ENCODE measurements at regions of chr10 and their contacts with region 1.

Region 1: DNA sequence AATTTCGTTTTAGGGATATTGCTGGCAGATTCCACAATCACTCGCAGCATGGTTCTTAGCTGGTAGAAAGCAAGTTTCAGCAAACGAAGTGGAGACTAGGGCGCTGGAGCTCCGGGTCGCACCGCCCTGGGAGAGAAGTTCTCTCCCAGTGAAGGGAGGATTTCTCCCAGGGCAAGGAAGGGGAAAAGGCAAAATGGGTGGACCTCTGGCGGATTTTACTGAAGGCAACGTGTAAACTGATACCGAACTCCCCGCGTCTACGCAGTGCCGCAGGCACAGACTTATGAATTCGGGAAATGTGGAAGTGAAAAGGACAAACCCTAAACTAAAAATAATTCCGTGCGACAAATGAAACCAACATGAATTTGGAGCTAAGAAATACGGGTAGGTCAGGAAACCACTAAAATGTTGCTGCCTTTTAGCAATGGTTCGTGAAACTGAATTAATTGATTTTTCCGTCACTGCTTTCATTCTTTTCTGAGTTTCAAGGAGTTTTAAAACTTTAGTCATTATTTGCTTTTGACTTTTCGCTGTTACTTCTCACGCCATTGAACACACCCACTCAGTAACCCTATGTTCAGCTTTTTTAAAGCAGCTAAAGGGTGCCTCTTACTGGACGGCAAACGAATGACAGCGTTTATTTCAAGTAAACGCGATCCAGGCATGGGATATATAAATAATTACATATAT is at the start of gene MYOF:
- DNase-seq: peak; percentile 89
- H3K4me3 ChIP-seq: peak within 1 kb of the TSS; percentile 57 to 99 (median 72)
- H3K27ac ChIP-seq: peak within 1 kb of the TSS; percentile 89
- H3K4me1 ChIP-seq: peaks cover 22% of the 10 kb centered on the region
- H3K27me3 ChIP-seq: no peaks in the 10 kb centered on the region
- CTCF ChIP-seq: peak; percentile 46 to 47
- POLR2A ChIP-seq: peak; percentile 76
- total RNA-seq, gene MYOF: 342 and 379 TPM in 2 replicates

Region 2: DNA sequence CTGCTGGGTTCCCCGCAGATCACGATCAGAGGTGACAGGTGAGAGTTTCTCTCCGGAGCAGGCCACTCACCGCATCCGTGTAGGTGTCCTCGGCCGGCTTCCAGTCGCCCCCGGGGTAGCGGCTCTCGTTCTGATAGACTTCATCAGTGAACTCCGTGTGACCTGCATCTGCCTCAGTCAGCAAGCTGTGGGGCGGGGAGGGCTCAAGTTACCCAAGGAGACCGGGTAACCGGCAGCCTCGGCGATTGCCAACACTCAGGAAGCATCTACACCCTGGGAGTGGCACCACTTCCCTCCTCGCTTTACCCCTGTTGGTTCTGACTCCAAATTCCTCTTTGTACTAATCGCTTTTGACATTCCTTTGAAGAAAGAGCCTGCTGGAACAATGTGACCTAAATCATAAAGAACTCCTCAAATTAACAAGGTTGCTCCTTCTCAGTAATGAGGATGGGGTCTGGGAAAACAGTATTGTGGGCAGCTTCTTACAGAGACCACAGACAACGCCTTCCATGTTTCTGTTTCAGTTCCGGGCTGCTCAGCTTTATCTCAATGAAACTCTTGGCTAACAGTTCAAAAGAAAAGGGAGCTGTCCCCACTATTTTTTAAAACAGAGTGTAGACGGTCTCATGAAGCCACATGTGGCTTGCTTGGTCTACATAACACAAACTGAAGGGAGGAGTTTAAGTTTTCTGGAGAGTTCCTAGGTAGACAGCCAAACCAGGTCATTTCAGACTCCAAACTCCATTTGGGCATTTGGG is 118.2 kb before region 1 on chr10:
- CTCF ChIA-PET with region 1: interaction called, 14 read pairs
- POLR2A ChIA-PET with region 1: interaction called, 3 read pairs
- dilution Hi-C with region 1: no loop called
- intact Hi-C with region 1: no loop called
- DNase-seq: no peak
- H3K4me3 ChIP-seq: no peak overlapping the region
- H3K27ac ChIP-seq: no peak overlapping the region
- H3K4me1 ChIP-seq: peaks cover 18% of the 10 kb centered on the region
- H3K27me3 ChIP-seq: no peaks in the 10 kb centered on the region
- CTCF ChIP-seq: no peak
- POLR2A ChIP-seq: no peak

Region 3: GRCh38 chr10:93397020-93397419 is 85.3 kb before region 1 on chr10:
- CTCF ChIA-PET with region 1: interaction called, 48 read pairs
- POLR2A ChIA-PET with region 1: interaction called, 14 read pairs
- dilution Hi-C with region 1: no loop called
- intact Hi-C with region 1: no loop called
- DNase-seq: no peak
- H3K4me3 ChIP-seq: no peak overlapping the region
- H3K27ac ChIP-seq: no peak overlapping the region
- H3K4me1 ChIP-seq: no peaks in the 10 kb centered on the region
- H3K27me3 ChIP-seq: no peaks in the 10 kb centered on the region
- CTCF ChIP-seq: no peak
- POLR2A ChIP-seq: no peak

Region 4: DNA sequence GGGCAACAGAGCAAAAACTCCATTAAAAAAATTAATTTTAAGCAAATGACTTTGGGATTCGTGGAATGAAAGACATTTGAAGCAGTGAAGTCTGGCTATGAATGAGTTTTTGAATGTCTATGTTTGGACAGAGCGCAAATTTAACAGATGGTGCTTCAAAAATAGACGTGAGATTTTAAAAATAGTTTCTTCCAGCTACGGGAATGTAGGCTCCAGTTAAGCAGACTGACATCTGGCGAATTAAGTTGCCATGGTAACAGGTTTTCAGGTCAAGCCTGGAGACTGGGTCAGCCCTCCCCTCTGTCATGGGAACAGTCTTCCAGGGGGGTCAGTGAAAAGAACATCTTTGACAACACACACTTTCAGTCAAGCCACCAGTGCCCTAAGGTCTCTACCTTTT is 62.2 kb before region 1 on chr10:
- CTCF ChIA-PET with region 1: interaction called, 23 read pairs
- POLR2A ChIA-PET with region 1: no interaction called
- dilution Hi-C with region 1: no loop called
- intact Hi-C with region 1: no loop called
- DNase-seq: no peak
- H3K4me3 ChIP-seq: no peak overlapping the region
- H3K27ac ChIP-seq: no peak overlapping the region
- H3K4me1 ChIP-seq: peaks cover 30% of the 10 kb centered on the region
- H3K27me3 ChIP-seq: no peaks in the 10 kb centered on the region
- CTCF ChIP-seq: no peak
- POLR2A ChIP-seq: no peak

Region 5: GRCh38 chr10:93458821-93459257 is 23.5 kb before region 1 on chr10:
- CTCF ChIA-PET with region 1: interaction called, 76 read pairs
- POLR2A ChIA-PET with region 1: interaction called, 10 read pairs
- dilution Hi-C with region 1: no loop called
- intact Hi-C with region 1: loop called (anchors 1 kb)
- DNase-seq: peak; percentile 98
- H3K4me3 ChIP-seq: no peak overlapping the region
- H3K27ac ChIP-seq: peak overlapping the region; percentile 85
- H3K4me1 ChIP-seq: peaks cover 57% of the 10 kb centered on the region
- H3K27me3 ChIP-seq: no peaks in the 10 kb centered on the region
- CTCF ChIP-seq: no peak
- POLR2A ChIP-seq: peak; percentile 48

Region 6: DNA sequence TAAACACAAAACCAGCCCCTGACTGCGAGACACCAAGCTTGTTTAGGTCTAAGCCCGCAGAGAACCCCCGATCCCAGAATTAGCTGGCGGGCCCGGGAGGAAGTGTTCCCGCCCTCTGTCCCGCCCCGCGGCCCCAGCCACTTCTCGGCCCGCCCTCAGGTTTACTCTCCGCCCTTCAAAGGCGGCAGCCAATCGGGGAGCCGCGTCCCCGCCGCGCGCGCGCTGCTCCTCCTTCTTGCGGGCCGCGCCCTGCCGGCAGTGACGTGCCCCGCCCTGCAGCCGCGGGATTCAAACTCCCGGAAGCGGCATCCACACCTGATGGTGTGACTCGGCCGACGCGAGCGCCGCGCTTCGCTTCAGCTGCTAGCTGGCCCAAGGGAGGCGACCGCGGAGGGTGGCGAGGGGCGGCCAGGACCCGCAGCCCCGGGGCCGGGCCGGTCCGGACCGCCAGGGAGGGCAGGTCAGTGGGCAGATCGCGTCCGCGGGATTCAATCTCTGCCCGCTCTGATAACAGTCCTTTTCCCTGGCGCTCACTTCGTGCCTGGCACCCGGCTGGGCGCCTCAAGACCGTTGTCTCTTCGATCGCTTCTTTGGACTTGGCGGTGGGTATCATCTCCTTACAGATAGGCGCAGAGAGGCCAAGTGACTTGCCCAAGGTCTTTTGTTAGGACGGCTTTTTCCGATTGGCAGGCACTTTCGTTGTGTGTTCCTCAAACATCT is 14.2 kb after region 1 on chr10 and contains the start of gene CEP55:
- CTCF ChIA-PET with region 1: interaction called, 21 read pairs
- POLR2A ChIA-PET with region 1: no interaction called
- dilution Hi-C with region 1: no loop called
- intact Hi-C with region 1: no loop called
- DNase-seq: peak; percentile 97
- H3K4me3 ChIP-seq: peak within 1 kb of the TSS; percentile 83 to 96 (median 89)
- H3K27ac ChIP-seq: peak within 1 kb of the TSS; percentile 62
- H3K4me1 ChIP-seq: peaks cover 21% of the 10 kb centered on the region
- H3K27me3 ChIP-seq: no peaks in the 10 kb centered on the region
- CTCF ChIP-seq: no peak
- POLR2A ChIP-seq: peak; percentile 76
- total RNA-seq, gene CEP55: 58.9 and 63.0 TPM in 2 replicates

Region 7: GRCh38 chr10:93515071-93516005 is 33.0 kb after region 1 on chr10:
- CTCF ChIA-PET with region 1: interaction called, 20 read pairs
- POLR2A ChIA-PET with region 1: no interaction called
- dilution Hi-C with region 1: no loop called
- intact Hi-C with region 1: no loop called
- DNase-seq: peak; percentile 66
- H3K4me3 ChIP-seq: no peak overlapping the region
- H3K27ac ChIP-seq: no peak overlapping the region
- H3K4me1 ChIP-seq: peaks cover 4% of the 10 kb centered on the region
- H3K27me3 ChIP-seq: no peaks in the 10 kb centered on the region
- CTCF ChIP-seq: no peak
- POLR2A ChIP-seq: no peak